Posterior vena cava (tissue), 2 donors: ENCODE measurements at regions of chr15 and their contacts with region 1.

Region 1: DNA sequence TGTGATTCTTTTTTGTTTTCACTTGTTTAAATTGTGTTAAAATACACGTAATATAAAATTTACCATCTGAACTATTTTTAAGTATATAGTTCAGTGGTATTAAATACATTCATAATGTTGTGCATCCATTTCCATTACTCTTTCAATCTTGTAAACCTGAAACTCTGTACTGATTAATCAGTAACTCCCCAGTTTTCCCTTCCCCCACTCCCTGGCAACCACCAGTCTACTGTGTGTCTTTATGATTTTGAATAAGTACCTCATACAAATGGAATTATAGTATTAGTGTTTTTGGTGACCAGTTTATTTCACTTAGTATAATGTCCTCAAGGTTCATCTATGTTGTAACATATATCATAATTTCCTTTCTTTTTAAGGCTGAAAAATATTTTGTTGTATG is 59.3 kb downstream of the GLCE start:
- DNase-seq: no peak

Region 2: GRCh38 chr15:68187559-68187958 is 1032.1 kb before region 1 on chr15:
- intact Hi-C with region 1: no loop called
- DNase-seq: no peak

Region 3: GRCh38 chr15:69194025-69194827 is 25.5 kb before region 1 on chr15:
- intact Hi-C with region 1: loop called in 1 of 2 experiments (anchors 1 kb)
- DNase-seq: no peak